Activated CD4-positive, alpha-beta memory T cell treated with anti-CD3 and anti-CD28 coated beads for 36 hours (primary cell): ENCODE measurements at regions of chr1 and their contacts with region 1.

Region 1: DNA sequence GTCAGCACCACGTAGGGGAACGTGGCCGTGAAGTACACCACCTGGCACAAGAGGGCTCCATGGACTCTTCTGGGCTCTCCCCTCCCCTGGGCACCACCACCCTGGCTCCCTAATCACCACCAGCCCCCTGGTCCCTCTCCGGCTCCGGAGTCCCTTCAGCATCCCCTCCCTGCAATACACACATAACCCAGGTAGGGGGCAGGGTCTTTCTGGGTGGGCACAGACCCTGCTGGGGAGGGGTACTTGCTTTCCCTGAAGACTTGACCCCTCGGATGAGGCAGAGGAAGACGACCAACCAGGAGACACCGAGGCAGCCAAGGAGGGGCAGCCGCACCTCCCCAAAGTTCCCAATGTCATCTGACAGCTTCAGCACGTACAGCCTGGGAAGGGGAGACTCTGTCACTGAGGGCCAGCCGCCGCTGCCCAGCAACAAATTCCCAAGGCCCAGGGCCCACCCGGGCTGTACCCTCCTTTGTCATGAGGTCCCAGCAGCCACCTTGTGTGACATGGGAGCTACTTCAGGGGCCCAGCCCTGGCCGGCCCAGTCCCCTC is 11.3 kb downstream of the CCDC24 start:
- DNase-seq: no peak
- H3K4me3 Mint-ChIP-seq: no peak overlapping the region
- H3K27ac Mint-ChIP-seq: no peak overlapping the region
- H3K4me1 Mint-ChIP-seq: no peaks in the 10 kb centered on the region
- H3K27me3 Mint-ChIP-seq: no peaks in the 10 kb centered on the region

Region 2: DNA sequence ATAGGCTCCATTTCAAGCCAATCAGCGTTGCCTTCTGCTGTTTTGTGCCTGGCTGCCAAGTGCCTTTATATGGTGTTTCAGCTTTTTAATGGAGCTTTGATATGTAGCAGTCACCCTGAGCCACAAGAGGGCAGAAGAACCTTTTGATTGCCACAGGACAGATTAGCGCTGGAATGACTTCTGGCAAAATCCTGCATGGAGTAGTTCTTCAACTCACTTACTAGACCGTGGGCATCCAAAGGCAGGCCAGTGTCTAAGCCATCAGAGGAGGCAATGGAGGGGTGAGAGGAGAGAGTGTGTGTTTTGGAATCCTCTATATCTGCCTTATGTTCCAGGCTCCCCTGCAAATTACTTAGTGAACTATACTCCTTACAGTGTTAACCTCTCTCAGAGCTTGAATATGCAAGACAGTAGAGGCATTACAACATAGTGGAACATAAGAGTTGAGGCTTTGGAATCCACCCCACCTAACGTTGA is 239.1 kb before region 1 on chr1:
- CTCF ChIA-PET with region 1: interaction called, 13 read pairs
- POLR2A ChIA-PET with region 1: no interaction called
- intact Hi-C with region 1: no loop called
- DNase-seq: peak; percentile 53
- H3K4me3 Mint-ChIP-seq: no peak overlapping the region
- H3K27ac Mint-ChIP-seq: no peak overlapping the region
- H3K4me1 Mint-ChIP-seq: no peaks in the 10 kb centered on the region
- H3K27me3 Mint-ChIP-seq: no peaks in the 10 kb centered on the region

Region 3: GRCh38 chr1:44019466-44019948 is 16.8 kb after region 1 on chr1:
- CTCF ChIA-PET with region 1: interaction called, 18 read pairs
- POLR2A ChIA-PET with region 1: no interaction called
- intact Hi-C with region 1: no loop called
- DNase-seq: no peak
- H3K4me3 Mint-ChIP-seq: no peak overlapping the region
- H3K27ac Mint-ChIP-seq: no peak overlapping the region
- H3K4me1 Mint-ChIP-seq: no peaks in the 10 kb centered on the region
- H3K27me3 Mint-ChIP-seq: no peaks in the 10 kb centered on the region

Region 4: DNA sequence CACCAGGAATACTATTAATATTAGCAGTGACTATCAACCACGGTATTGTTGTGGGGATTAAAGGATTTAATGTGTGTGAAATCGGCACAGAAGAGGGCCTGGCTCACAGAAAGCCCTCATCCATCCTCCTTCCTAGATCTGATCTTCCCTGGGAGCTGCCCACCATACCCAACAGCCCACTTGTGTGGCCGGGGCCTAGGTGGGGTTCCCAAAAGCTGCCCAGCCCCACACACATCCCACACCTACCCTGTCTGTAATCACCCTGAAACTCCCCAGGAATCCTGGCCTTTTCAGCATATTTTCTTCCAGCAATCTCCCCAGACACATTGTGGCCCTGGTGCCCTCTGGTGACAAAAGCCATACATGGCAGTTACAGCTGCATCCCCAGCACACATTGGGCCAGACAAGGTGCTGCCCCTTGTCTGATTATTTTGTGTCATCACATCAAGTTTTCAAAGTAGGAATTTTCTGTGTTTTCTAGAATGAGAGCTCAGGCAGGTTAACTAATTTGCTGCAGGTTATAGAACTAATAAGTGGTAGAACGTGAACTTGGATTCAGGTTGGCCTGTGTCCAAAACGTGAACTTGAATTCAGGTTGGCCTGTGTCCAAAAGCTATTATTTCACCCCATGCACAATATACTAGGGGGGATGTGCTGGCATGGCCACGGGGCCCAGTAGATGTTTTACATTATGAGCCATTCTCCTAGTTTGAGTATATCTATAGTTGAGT is 33.9 kb after region 1 on chr1:
- CTCF ChIA-PET with region 1: interaction called, 123 read pairs
- POLR2A ChIA-PET with region 1: no interaction called
- intact Hi-C with region 1: loop called (anchors 1 kb)
- DNase-seq: peak; percentile 81
- H3K4me3 Mint-ChIP-seq: no peak overlapping the region
- H3K27ac Mint-ChIP-seq: no peak overlapping the region
- H3K4me1 Mint-ChIP-seq: peaks cover 2% of the 10 kb centered on the region
- H3K27me3 Mint-ChIP-seq: no peaks in the 10 kb centered on the region

Region 5: DNA sequence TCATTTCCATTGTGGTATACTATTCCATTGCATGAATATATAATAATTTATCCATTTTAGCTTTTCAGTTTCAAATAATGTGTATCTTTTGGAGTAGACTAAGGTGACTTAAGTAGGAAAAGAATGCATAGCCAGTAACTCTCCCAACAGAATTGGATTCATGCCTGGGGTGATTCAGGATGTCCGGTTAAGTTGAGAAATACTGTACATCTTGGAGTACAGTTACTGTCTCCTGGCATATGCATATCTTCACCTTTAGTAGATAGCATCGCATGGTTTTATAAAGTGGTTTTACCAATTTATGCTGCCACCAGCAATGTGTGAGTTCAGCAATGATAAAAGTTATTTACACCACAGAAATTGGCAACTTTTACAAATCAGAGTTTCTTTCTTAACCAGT is 47.2 kb after region 1 on chr1:
- CTCF ChIA-PET with region 1: interaction called, 95 read pairs
- POLR2A ChIA-PET with region 1: no interaction called
- intact Hi-C with region 1: no loop called
- DNase-seq: no peak
- H3K4me3 Mint-ChIP-seq: no peak overlapping the region
- H3K27ac Mint-ChIP-seq: no peak overlapping the region
- H3K4me1 Mint-ChIP-seq: peaks cover 18% of the 10 kb centered on the region
- H3K27me3 Mint-ChIP-seq: peaks cover 3% of the 10 kb centered on the region

Region 6: GRCh38 chr1:44798481-44799365 is 796.0 kb after region 1 on chr1:
- CTCF ChIA-PET with region 1: no interaction called
- POLR2A ChIA-PET with region 1: no interaction called
- intact Hi-C with region 1: no loop called
- DNase-seq: no peak
- H3K4me3 Mint-ChIP-seq: no peak overlapping the region
- H3K27ac Mint-ChIP-seq: peak overlapping the region; percentile 95
- H3K4me1 Mint-ChIP-seq: peaks cover 24% of the 10 kb centered on the region
- H3K27me3 Mint-ChIP-seq: no peaks in the 10 kb centered on the region